ENCODE measurements at regions of chr22 and their contacts with region 1.

Region 1: DNA sequence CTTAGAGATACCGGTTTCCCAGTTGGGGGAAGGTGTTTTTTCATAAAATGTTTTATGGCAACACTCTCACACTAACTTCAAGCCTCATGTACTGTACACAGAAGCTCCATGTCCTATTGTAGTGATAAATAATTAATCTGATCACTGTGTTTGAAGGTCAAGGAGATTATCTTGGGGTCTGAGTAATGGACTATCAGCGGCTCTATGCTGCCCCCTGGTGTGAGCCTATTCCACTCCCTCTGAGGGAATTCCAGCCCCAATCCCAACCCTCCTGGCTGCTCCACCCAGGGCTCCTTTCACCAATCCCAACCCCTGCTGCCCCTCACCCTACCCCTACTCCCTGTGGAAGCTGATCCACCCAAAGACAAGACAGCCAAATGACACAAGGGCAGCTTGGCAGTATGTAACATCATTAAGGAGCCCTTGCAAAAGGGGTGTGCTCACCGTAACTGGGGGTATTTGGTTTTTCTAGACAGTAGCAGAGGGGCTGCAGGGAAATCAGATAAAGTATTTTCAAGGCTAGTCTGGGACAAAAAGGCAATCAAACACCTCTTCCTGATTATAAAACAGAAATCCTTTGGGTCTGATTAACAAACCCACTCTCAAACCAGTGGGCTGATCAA is 22.3 kb downstream of the HPS4 start:
- DNase-seq: peak; percentile 84

Region 2: GRCh38 chr22:26364066-26365015 is 97.0 kb before region 1 on chr22:
- CTCF ChIA-PET with region 1: interaction called, 27 read pairs
- POLR2A ChIA-PET with region 1: no interaction called
- DNase-seq: peak; percentile 78

Region 3: DNA sequence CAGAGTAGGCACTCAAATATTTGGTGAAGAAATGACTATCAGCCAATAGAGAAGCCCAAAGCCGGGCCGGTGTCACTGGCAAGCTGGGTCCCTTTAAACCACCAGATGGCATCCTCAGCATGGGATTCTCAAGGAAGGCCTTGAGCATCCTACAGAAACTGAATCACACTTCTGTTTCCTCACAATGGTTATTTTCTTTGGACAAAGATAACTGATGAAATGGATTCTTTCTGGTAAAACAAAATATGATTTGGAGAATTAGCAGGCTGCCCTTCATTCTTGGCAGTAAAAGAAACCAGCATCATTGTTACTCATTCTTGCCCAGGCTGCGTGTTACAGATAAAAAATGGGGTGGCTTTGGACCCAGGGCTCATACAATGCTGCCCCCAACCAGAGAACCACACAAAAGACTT is 62.6 kb before region 1 on chr22:
- CTCF ChIA-PET with region 1: interaction called, 21 read pairs
- POLR2A ChIA-PET with region 1: no interaction called
- DNase-seq: peak; percentile 67

Measured in HEK293T (cell line).